ENCODE measurements at regions of chr12 and their contacts with region 1.

Region 1: DNA sequence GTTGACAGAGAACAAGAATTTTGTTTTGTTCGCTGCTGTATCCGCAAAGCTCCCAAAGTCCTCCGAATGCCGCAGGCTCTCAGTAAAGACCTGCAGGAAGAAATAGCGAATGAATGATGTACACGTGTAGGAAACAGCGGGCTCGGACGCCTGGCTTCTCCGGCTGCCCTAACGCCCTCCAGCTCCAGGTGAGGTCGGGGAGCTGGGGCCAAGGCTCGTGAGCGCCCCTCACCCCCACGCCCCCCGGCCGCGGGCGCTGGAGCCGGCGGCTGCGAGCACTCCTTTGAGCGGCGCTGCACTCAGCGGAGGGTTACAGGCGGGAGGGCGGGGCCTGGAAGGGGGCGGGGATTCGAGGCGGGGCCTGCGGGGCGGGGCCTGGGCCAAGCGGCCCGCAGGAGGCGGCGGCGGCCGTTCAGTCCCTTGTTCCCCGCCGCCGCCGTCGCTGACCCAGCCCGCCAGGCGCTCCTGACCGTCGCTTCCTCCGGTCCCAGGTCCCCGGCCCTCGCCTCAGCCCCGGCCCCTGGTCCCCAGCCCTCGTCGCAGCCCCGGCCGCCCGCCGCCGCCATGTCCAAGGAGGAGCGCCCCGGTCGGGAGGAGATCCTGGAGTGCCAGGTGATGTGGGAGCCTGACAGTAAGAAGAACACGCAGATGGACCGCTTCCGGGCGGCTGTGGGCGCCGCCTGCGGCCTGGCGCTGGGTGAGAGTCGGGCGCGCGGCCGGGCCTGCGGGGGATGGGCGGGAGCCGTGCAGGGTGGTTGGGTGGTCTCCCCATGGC is at the start of gene AACS:
- DNase-seq: peak; percentile 58
- H3K4me3 Mint-ChIP-seq: peak within 1 kb of the TSS; percentile 84
- H3K27ac Mint-ChIP-seq: peak within 1 kb of the TSS; percentile 40
- H3K4me1 Mint-ChIP-seq: peaks cover 17% of the 10 kb centered on the region
- H3K27me3 Mint-ChIP-seq: peaks cover 7% of the 10 kb centered on the region
- total RNA-seq, gene AACS: 26.7 and 27.8 TPM in 2 replicates

Region 2: DNA sequence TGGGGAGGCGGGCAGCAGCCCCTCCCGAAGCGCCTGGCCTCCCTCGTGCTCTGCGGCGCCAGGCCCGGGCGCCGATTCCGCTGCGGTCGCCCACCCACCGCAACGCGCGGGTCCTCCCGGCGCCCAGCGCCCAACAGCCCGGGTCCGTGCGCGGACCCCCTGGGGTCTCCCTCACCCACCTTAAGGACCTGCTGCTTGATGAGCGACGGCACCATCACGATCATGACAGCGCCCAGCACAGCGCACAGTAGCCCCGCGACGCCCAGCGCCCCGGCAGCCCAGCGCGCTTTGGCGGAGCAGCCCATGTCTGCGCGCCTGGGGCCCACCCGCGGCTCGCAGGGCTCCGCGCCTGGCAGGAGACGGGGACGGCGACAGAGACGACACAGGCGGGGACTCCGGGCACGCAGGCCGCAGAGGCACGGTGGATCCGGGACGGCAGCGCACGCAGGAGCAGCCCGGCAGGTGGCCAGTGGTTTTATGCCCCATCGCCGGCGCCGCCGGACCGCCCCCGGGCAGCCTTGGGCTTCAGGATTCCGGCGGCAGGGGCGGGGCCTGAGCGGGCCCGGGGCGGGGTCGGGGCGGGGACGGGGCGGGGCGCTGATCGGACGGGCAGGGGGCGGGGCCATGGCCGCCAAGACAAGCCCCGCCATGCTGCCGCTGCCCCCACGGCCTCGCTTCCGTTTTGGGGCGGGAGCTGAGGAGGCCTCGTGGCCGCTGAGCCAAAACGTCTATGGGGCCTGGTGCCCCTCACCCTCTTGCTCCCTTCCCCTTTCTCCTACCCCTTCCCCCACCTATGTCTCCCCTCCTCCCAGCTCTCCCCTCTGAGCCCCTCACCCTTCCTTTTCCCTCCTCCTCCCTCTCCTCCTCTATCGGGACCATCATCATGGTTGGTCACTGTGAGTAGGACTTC is 201.5 kb before region 1 on chr12 and contains the start of gene SCARB1:
- intact Hi-C with region 1: loop called (anchors 5 kb)
- DNase-seq: peak; percentile 70
- H3K4me3 Mint-ChIP-seq: peak within 1 kb of the TSS; percentile 85
- H3K27ac Mint-ChIP-seq: peak within 1 kb of the TSS; percentile 90
- H3K4me1 Mint-ChIP-seq: peaks cover 23% of the 10 kb centered on the region
- H3K27me3 Mint-ChIP-seq: peaks cover 2% of the 10 kb centered on the region
- total RNA-seq, gene SCARB1: 17.9 and 18.5 TPM in 2 replicates

Region 3: DNA sequence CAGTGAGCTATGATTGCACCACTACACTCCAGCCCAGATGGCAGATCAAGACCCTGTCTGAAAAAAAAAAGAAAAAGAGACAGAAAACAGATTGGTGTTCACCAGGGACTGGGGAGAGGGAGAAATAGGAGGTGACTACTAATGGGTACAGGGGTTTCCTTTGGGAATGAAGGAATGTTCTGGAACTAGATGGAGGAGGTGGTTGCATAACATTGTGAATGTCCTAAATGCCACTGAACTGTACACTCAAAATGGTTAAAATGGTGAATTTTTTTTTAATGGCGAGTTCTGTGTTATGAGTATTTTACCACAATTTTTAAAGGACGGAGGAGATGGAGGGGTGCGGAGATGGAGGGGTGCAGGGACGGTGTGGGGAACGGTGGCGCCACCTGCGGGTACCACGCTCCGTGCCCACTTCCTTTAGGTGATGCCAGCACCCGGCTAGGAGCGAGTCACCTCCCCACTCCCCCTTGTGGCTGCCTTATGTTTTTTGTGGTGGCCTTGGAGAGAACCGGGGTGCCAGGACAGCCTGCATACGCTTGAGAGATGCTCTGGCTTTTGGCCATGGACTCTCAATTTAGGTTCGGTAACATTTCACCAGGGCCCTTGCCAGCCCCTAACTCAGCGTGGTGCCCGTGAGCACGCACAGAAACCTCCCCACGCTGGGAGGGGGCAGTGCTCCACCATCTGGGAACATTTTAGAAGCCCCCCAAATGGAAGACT is 166.8 kb before region 1 on chr12:
- intact Hi-C with region 1: no loop called
- DNase-seq: peak; percentile 45
- H3K4me3 Mint-ChIP-seq: no peak overlapping the region
- H3K27ac Mint-ChIP-seq: no peak overlapping the region
- H3K4me1 Mint-ChIP-seq: peaks cover 21% of the 10 kb centered on the region
- H3K27me3 Mint-ChIP-seq: peaks cover 5% of the 10 kb centered on the region

Region 4: GRCh38 chr12:124952801-124953200 is 112.4 kb before region 1 on chr12:
- intact Hi-C with region 1: no loop called
- DNase-seq: no peak
- H3K4me3 Mint-ChIP-seq: no peak overlapping the region
- H3K27ac Mint-ChIP-seq: no peak overlapping the region
- H3K4me1 Mint-ChIP-seq: no peaks in the 10 kb centered on the region
- H3K27me3 Mint-ChIP-seq: no peaks in the 10 kb centered on the region

Region 5: GRCh38 chr12:126316411-126316810 is 1251.2 kb after region 1 on chr12:
- intact Hi-C with region 1: no loop called
- DNase-seq: no peak
- H3K4me3 Mint-ChIP-seq: no peak overlapping the region
- H3K27ac Mint-ChIP-seq: no peak overlapping the region
- H3K4me1 Mint-ChIP-seq: no peaks in the 10 kb centered on the region
- H3K27me3 Mint-ChIP-seq: no peaks in the 10 kb centered on the region